Gastrocnemius medialis (tissue), 4 donors: ENCODE measurements at regions of chr19 and their contacts with region 1.

Region 1: GRCh38 chr19:9945319-9945966 is 9.1 kb upstream of the OLFM2 start:
- DNase-seq: peak; percentile 73 to 85
- ATAC-seq: peak; percentile 90 to 94
- H3K4me3 ChIP-seq: no peak overlapping the region
- H3K27ac ChIP-seq: peak overlapping the region; percentile 51 to 68 (median 67)
- H3K4me1 ChIP-seq: peaks cover 0 to 7% of the 10 kb centered on the region in 2 donors
- H3K27me3 ChIP-seq: peaks cover 0 to 8% (median 0%) of the 10 kb centered on the region in 3 donors
- CTCF ChIP-seq: no peak
- POLR2A ChIP-seq: no peak

Region 2: GRCh38 chr19:9971166-9971897 is 25.9 kb after region 1 on chr19:
- in situ Hi-C with region 1: no loop called
- intact Hi-C with region 1: no loop called
- DNase-seq: no peak
- ATAC-seq: no peak
- H3K4me3 ChIP-seq: no peak overlapping the region
- H3K27ac ChIP-seq: no peak overlapping the region
- H3K4me1 ChIP-seq: no peaks in the 10 kb centered on the region
- H3K27me3 ChIP-seq: no peaks in the 10 kb centered on the region
- CTCF ChIP-seq: no peak
- POLR2A ChIP-seq: no peak

Region 3: DNA sequence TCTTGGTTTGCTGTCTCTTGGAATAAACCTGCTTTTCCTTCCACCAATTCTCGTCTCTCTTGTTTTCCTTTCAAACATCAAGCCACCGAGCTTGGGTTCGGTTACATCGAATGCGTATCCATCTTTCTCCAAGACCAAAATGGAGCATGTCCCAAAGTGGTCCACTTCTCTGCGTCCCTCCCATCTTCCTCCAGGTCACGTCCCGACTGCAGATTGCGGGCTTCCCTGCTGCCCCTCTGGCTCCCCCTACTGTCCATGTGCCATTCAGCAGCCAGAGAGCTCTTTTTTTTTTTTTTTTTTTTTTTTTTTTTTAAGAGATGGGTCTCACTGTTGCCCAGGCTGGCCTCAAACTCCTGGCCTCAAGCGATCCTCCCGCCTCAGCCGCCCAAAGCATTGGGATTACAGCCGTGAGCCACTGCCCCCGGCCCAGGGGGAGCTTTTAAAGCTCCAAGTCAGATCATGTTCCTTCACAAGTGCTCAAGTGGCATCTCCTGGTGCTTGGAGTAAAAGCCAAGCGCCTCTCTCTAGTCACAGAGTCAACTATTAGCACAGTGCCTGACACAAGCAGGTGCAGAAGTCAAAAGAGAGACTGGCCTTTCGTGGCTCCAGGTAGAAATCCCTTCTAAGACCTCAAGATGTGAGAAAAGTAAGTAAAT is 54.9 kb after region 1 on chr19:
- in situ Hi-C with region 1: loop called in 1 of 4 experiments (anchors 10 kb)
- intact Hi-C with region 1: loop called (anchors 5 kb)
- DNase-seq: peak; percentile 17 to 25
- ATAC-seq: no peak
- H3K4me3 ChIP-seq: no peak overlapping the region
- H3K27ac ChIP-seq: peak overlapping the region in 1 of 4 donors; percentile 14
- H3K4me1 ChIP-seq: no peaks in the 10 kb centered on the region
- H3K27me3 ChIP-seq: no peaks in the 10 kb centered on the region
- CTCF ChIP-seq: peak; percentile 9 to 60 (median 30)
- POLR2A ChIP-seq: no peak

Region 4: GRCh38 chr19:10006335-10006708 is 60.9 kb after region 1 on chr19:
- in situ Hi-C with region 1: loop called in 1 of 4 experiments (anchors 10 kb)
- intact Hi-C with region 1: loop called (anchors 5 kb)
- DNase-seq: peak; percentile 36 to 41
- ATAC-seq: peak; percentile 41 to 48
- H3K4me3 ChIP-seq: peak overlapping the region in 3 of 4 donors; percentile 12 to 13 (median 13)
- H3K27ac ChIP-seq: peak overlapping the region; percentile 74 to 75 (median 74)
- H3K4me1 ChIP-seq: no peaks in the 10 kb centered on the region
- H3K27me3 ChIP-seq: peaks cover 8 to 33% (median 26%) of the 10 kb centered on the region in 3 donors
- CTCF ChIP-seq: no peak
- POLR2A ChIP-seq: no peak

Region 5: GRCh38 chr19:10027158-10027693 is 81.8 kb after region 1 on chr19:
- in situ Hi-C with region 1: loop called in 1 of 4 experiments (anchors 10 kb)
- intact Hi-C with region 1: no loop called
- DNase-seq: no peak
- ATAC-seq: no peak
- H3K4me3 ChIP-seq: no peak overlapping the region
- H3K27ac ChIP-seq: no peak overlapping the region
- H3K4me1 ChIP-seq: no peaks in the 10 kb centered on the region
- H3K27me3 ChIP-seq: peaks cover 0 to 3% (median 0%) of the 10 kb centered on the region in 3 donors
- CTCF ChIP-seq: no peak
- POLR2A ChIP-seq: no peak